ENCODE measurements at regions of chr22 and their contacts with region 1.

Region 1: DNA sequence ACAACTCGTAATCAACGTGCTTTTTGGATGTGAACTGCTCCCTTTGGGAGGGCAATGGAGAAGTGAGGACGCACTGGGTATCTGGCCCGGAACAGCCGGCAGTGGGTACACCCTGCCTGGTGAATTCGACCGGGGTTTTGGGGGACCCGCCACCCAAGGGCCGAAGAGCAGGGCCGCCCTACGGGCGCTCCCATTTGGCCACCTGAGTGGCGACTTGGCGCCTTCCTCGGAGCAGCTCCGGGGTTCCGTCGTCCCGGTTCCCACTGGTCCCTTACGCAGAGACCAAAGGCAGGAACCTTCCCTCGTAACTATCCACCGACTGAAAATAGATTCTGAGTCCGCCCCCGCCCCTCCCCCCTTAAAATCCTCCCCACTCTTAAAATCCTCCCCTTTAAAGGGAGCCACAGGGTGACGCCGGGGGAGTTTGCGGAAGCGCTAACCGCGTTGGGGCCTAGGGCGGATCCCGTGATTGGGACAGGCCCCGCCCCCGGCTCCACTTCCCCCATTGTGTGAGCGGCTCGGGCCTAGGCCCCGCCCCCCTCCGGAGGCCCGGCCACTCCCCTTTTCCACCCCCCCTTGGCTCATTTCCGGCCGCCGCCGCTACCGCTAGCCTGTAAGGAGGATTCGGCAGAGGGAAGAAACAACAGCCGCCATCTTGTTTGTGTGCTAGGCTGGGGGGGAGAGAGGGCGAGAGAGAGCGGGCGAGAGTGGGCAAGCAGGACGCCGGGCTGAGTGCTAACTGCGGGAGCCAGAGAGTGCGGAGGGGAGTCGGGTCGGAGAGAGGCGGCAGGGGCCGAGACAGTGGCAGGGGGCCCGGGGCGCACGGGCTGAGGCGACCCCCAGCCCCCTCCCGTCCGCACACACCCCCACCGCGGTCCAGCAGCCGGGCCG is 1.0 kb upstream of the EP300 start:
- DNase-seq: peak; percentile 95 to 100 (median 99)

Region 2: DNA sequence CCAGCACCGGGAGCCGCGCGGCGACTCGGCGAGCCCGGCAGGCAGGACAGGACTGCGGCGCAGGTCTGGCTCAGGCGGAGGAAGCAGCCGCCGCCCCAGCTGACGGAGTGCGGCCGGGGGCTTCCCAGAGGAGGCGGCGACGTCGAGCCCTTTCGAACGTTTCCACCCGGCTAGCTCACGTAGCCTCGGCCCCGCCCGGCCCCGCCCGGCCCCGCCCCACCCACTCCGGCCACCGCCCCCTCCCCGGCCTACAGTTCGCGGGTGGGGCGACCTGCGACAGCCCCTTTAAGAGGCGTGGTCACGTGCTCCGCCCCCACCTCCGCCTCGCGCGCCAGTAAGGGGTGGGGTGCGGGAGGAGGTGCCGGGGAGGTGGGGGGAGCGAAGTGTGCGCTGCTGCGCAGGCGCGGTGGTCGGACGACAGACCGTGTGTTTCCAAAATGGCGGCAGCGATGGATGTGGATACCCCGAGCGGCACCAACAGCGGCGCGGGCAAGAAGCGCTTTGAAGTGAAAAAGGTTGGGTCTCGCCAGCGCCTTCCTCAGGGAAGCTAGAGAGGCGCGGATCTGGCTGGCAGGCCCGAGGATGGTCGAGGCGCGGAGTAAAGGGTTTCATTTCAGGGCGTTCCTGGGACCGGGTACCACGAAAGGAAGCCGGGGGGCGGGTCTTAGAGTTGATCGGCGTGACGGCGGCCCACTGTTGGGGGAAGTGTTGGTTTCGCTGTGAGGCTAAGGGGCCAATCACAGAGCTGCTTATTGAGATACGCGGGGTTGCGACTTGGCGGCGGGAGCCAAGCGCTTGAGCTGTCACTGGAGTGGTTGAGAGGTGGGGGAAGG is 140.2 kb before region 1 on chr22 and contains the start of gene RBX1:
- intact Hi-C with region 1: loop called (anchors 1 kb)
- DNase-seq: peak; percentile 98 to 100 (median 99)

Region 3: DNA sequence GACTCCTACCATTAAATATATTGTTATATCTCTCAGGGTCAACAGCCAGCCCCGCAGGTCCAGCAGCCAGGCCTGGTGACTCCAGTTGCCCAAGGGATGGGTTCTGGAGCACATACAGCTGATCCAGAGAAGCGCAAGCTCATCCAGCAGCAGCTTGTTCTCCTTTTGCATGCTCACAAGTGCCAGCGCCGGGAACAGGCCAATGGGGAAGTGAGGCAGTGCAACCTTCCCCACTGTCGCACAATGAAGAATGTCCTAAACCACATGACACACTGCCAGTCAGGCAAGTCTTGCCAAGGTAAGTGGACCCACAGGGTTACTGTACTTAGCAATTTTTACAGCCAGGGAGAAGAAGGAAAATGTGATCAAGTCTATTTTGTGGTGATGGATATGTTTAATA is 36.1 kb after region 1 on chr22:
- intact Hi-C with region 1: no loop called
- DNase-seq: peak in 6 of 42 donors; percentile 6 to 52 (median 12)

Region 4: GRCh38 chr22:41197038-41197972 is 105.9 kb after region 1 on chr22:
- intact Hi-C with region 1: loop called (anchors 10 kb)
- DNase-seq: peak; percentile 68 to 96 (median 90)

Region 5: DNA sequence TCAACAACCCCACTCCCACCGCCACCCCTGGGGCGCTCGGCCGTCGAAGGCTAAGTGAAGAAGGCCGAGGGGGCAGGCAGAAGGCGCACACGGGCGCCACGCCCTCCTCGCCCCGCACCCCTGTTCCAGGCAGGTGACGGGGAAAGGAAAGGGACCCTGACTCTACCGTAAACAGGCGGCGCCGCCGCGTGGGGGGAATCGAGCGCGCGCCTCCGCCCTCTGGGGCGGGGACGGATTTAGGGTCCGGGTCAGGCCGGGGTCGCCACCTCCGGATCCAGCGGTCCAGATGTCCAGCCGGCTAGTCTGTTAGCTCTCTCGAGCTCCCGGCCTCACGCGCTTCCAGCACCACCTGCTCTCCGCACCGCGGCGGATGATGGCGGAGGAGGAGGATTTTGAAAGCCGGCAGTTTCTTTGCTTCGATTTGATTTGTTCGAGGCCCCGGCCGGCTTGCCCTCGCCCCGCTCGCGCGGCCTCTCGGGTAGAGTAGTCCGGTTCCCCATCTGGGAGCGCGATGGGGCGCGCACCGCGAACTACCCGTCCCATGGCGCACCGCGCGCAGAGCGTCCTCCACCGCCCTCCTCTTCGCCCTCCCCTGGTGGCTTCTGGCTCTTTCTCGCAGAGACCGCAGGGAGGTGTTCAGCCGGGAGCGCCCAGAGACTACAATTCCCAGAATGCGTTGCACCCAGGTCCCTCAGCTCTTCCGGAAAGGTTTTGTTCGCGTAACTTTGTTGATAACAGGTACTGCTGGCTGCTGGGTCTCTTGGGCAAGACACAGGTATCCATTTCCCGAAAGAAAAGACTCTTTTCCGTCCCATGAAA is 194.7 kb after region 1 on chr22 and contains the start of gene RANGAP1:
- intact Hi-C with region 1: loop called (anchors 5 kb)
- DNase-seq: peak; percentile 97 to 100 (median 99)

Measured in head of caudate nucleus (tissue), 42 donors.